Sigmoid colon (tissue), 7 donors: ENCODE measurements at regions of chr17 and their contacts with region 1.

Region 1: DNA sequence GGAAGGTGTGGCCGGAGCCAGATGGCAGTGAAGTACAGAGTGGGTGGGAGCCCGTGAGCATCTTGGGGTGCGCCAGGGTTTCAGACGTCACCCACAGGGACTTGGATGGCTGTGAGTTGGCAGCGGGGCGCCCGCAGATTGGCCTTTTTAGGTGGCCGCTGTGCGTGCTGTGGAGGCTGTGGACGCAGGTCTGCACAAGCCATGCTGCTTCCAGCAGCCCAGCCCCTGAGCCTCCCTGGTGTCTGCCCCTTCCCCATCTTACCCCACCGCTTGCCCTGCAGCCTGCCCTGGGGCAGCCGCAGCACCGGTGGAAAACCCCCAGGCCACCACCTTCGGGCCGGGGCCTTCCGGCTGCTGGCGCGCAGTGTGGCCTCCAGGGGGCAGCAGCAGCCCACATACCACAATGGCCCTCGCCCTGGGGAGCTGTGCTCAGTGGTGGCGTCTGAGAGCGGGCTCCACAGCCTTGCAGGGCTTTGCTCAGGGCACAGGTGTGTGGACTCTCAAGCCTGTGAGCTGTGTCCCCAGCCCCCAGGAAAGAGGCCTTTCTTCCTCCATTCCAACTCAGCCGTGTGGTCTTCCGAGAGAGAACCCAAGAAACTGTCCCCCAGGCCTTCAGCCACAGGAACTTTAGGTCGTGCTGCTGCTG is 11.8 kb downstream of the ENDOV start:
- DNase-seq: peak; percentile 79
- H3K4me3 ChIP-seq: no peak overlapping the region
- H3K27ac ChIP-seq: no peak overlapping the region
- H3K4me1 ChIP-seq: peaks cover 0 to 10% (median 9%) of the 10 kb centered on the region in 4 donors
- H3K27me3 ChIP-seq: no peaks in the 10 kb centered on the region
- CTCF ChIP-seq: peak; percentile 93 to 98 (median 96)
- EP300 ChIP-seq: no peak
- POLR2A ChIP-seq: no peak

Region 2: DNA sequence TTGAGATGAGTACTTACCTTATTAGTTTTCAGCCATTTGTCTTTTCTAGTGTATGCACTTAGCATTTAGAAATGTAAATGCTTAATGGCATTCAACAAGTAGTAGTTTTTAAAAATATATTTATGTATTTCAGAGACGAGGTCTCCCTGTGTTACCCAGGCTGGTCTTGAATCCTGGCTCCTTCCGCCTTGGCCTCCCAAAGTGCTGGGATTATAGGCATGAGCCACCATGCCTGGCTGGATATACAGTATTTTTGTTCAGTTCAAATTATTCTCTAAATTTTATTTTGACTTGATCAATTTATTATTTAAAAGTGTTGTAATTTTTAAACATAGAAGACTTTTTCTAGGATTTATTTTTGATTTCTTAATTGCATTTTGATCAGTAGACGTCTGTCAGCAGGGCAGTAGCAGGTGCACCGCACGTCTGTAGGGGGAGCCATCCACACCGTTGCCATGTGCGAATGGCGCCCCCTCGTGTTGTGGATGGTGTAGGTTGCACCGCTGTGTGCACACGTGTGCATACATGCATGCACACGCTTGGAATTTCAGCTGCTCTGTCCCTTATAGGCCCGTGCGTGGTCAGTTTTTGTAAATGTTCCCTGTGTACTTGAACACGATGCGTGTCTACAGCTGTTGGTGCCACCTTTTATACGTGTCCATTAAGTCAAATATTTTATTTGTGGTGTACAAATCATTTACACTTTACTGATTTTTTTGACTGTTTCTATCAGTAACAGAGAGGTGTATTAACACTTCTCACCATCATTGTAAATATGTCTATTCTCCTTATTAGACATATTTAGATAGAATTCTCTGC is 148.5 kb after region 1 on chr17:
- intact Hi-C with region 1: loop called (anchors 1 kb)
- DNase-seq: peak; percentile 90
- H3K4me3 ChIP-seq: no peak overlapping the region
- H3K27ac ChIP-seq: no peak overlapping the region
- H3K4me1 ChIP-seq: peaks cover 0 to 13% (median 0%) of the 10 kb centered on the region in 4 donors
- H3K27me3 ChIP-seq: no peaks in the 10 kb centered on the region
- CTCF ChIP-seq: peak; percentile 98 to 100 (median 100)
- EP300 ChIP-seq: no peak
- POLR2A ChIP-seq: no peak

Region 3: DNA sequence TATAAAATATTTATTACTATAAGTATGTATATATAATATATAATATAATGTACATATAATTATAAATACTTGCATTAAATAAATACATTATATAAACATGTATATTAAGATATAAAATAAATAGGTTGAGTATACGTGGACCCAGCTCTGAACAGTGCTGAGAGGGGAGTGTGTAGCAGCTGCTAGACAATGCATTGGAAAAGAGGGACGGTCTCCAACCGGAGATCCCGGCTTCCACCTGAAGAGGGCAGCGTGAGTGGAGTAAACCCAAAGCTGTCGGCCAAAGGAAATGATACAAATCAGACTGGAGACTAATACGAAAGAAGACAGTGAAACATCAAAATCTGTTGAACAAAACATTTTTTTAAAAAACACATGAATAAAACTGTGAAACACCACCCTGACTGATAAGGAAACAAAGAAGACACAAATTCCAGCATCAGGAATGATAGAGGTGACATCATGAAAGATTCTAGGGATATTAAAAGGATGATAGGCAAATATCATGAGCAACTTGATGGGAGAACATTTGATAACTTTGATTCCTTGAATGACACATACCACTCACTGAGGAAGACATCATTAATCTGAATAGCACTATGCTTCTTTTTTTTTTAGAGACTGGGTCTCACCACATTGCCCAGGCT is 439.5 kb after region 1 on chr17:
- intact Hi-C with region 1: loop called (anchors 2 kb)
- DNase-seq: peak; percentile 83
- H3K4me3 ChIP-seq: no peak overlapping the region
- H3K27ac ChIP-seq: no peak overlapping the region
- H3K4me1 ChIP-seq: peaks cover 0 to 13% (median 11%) of the 10 kb centered on the region in 4 donors
- H3K27me3 ChIP-seq: no peaks in the 10 kb centered on the region
- CTCF ChIP-seq: peak; percentile 46 to 83 (median 78)
- EP300 ChIP-seq: no peak
- POLR2A ChIP-seq: no peak

Region 4: GRCh38 chr17:80981062-80981902 is 554.5 kb after region 1 on chr17:
- intact Hi-C with region 1: loop called (anchors 1 kb)
- DNase-seq: no peak
- H3K4me3 ChIP-seq: peak overlapping the region in 3 of 4 donors; percentile 18 to 45 (median 45)
- H3K27ac ChIP-seq: peak overlapping the region in 3 of 4 donors; percentile 4 to 43 (median 37)
- H3K4me1 ChIP-seq: peaks cover 4 to 33% (median 28%) of the 10 kb centered on the region in 4 donors
- H3K27me3 ChIP-seq: no peaks in the 10 kb centered on the region
- CTCF ChIP-seq: peak; percentile 12 to 96 (median 64)
- EP300 ChIP-seq: no peak
- POLR2A ChIP-seq: no peak